ENCODE measurements at regions of chr11 and their contacts with region 1.

Region 1: GRCh38 chr11:77091146-77091940 is 11.3 kb upstream of the OMP start:
- DNase-seq: peak; percentile 75
- ATAC-seq: peak; percentile 91
- H3K4me3 ChIP-seq: no peak overlapping the region
- H3K4me3 Mint-ChIP-seq: no peak overlapping the region
- H3K27ac ChIP-seq: no peak overlapping the region
- H3K27ac Mint-ChIP-seq: no peak overlapping the region
- H3K4me1 ChIP-seq: no peaks in the 10 kb centered on the region
- H3K4me1 Mint-ChIP-seq: no peaks in the 10 kb centered on the region
- H3K27me3 ChIP-seq: no peaks in the 10 kb centered on the region
- H3K27me3 Mint-ChIP-seq: no peaks in the 10 kb centered on the region
- CTCF ChIP-seq: peak; percentile 84

Region 2: GRCh38 chr11:76807206-76807875 is 284.0 kb before region 1 on chr11:
- CTCF ChIA-PET with region 1: interaction called, 16 read pairs
- POLR2A ChIA-PET with region 1: no interaction called
- intact Hi-C with region 1: no loop called
- DNase-seq: peak; percentile 70
- ATAC-seq: peak; percentile 70
- H3K4me3 ChIP-seq: no peak overlapping the region
- H3K4me3 Mint-ChIP-seq: no peak overlapping the region
- H3K27ac ChIP-seq: no peak overlapping the region
- H3K27ac Mint-ChIP-seq: no peak overlapping the region
- H3K4me1 ChIP-seq: peaks cover 0 to 5% of the 10 kb centered on the region in 2 donors
- H3K4me1 Mint-ChIP-seq: no peaks in the 10 kb centered on the region
- H3K27me3 ChIP-seq: peaks cover 0 to 30% (median 9%) of the 10 kb centered on the region in 4 experiments
- H3K27me3 Mint-ChIP-seq: peaks cover 39% of the 10 kb centered on the region
- CTCF ChIP-seq: peak; percentile 85

Region 3: DNA sequence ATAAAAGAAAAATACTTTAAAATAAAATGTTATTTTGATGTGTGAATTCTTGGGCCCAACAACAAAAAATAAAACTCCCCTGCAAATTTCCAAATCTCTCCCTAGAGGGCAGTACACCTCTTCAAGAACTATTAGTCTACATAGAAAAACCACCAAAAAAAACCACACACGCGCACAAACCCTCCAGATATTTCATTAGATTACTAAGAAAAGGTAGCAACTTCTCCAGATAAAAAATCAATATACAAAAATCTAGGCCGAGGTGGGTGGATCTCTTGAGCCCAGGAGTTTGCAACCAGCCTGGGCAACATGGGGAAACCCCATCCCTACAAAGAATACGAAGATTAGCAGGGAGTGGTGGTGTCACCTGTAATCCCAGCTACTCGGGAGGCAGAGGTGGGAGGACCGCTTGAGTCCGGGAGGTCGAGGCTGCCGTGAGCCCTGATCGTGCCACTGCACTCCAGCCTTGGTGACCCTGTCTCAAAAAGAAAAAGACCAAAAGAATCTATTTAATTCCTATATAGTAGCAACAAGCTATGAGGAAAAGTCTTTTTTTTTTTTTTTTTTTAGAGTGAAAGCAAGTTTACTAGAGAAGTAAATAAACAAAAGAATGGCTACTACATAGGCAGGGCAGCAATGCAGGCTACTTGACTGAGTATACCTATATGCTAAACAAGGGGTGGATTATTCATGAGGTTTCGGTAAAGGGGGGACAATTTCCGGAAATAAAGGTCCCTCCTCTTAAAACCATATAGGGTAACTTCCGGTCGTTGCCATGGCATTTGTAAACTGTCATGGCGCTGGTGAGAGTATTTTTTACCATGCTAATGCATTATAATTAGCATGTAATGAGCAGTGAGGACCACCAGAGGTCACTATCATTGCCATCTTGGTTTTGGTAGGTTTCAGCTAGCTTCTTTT is 44.1 kb before region 1 on chr11:
- CTCF ChIA-PET with region 1: interaction called, 73 read pairs
- POLR2A ChIA-PET with region 1: no interaction called
- intact Hi-C with region 1: loop called (anchors 1 kb)
- DNase-seq: peak; percentile 95
- ATAC-seq: peak; percentile 86
- H3K4me3 ChIP-seq: peak overlapping the region in 4 of 5 experiments; percentile 20 to 70 (median 46)
- H3K4me3 Mint-ChIP-seq: peak overlapping the region; percentile 67
- H3K27ac ChIP-seq: no peak overlapping the region
- H3K27ac Mint-ChIP-seq: peak overlapping the region; percentile 53
- H3K4me1 ChIP-seq: peaks cover 14 to 15% of the 10 kb centered on the region in 2 donors
- H3K4me1 Mint-ChIP-seq: peaks cover 13% of the 10 kb centered on the region
- H3K27me3 ChIP-seq: peaks cover 0 to 29% (median 17%) of the 10 kb centered on the region in 4 experiments
- H3K27me3 Mint-ChIP-seq: peaks cover 35% of the 10 kb centered on the region
- CTCF ChIP-seq: peak; percentile 67